ENCODE measurements at regions of chr5 and their contacts with region 1.

Region 1: GRCh38 chr5:33257807-33258483 is 182.8 kb upstream of the TARS1 start:
- DNase-seq: peak; percentile 80
- H3K4me3 ChIP-seq: no peak overlapping the region
- H3K27ac ChIP-seq: no peak overlapping the region
- H3K4me1 ChIP-seq: peaks cover 9% of the 10 kb centered on the region
- H3K27me3 ChIP-seq: no peaks in the 10 kb centered on the region
- CTCF ChIP-seq: no peak
- POLR2A ChIP-seq: no peak

Region 2: GRCh38 chr5:32964261-32964660 is 293.7 kb before region 1 on chr5:
- CTCF ChIA-PET with region 1: no interaction called
- POLR2A ChIA-PET with region 1: no interaction called
- dilution Hi-C with region 1: no loop called
- intact Hi-C with region 1: no loop called
- DNase-seq: no peak
- H3K4me3 ChIP-seq: no peak overlapping the region
- H3K27ac ChIP-seq: no peak overlapping the region
- H3K4me1 ChIP-seq: no peaks in the 10 kb centered on the region
- H3K27me3 ChIP-seq: peaks cover 0 to 3% of the 10 kb centered on the region in 2 experiments
- CTCF ChIP-seq: no peak
- POLR2A ChIP-seq: no peak

Region 3: DNA sequence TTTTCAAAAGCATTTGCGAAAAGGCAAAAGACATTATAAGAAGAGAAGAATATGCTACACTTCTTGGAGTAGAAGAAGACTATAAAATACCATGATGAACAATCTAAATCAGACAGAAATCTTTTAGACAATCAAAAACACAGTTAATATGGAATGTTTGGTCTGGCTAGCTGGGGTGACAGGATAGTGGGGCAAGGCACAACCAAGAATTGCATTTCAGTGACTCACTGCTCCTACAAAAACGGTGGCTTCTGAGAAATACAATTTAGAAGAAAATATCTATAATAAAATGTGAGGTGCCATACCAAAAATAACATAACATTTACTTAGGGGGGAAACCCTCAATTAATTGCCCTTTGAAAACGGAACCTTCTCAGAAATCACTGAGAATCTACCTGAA is 183.4 kb before region 1 on chr5:
- CTCF ChIA-PET with region 1: no interaction called
- POLR2A ChIA-PET with region 1: no interaction called
- dilution Hi-C with region 1: no loop called
- intact Hi-C with region 1: no loop called
- DNase-seq: no peak
- H3K4me3 ChIP-seq: no peak overlapping the region
- H3K27ac ChIP-seq: no peak overlapping the region
- H3K4me1 ChIP-seq: no peaks in the 10 kb centered on the region
- H3K27me3 ChIP-seq: peaks cover 0 to 2% of the 10 kb centered on the region in 2 experiments
- CTCF ChIP-seq: no peak
- POLR2A ChIP-seq: no peak

Region 4: DNA sequence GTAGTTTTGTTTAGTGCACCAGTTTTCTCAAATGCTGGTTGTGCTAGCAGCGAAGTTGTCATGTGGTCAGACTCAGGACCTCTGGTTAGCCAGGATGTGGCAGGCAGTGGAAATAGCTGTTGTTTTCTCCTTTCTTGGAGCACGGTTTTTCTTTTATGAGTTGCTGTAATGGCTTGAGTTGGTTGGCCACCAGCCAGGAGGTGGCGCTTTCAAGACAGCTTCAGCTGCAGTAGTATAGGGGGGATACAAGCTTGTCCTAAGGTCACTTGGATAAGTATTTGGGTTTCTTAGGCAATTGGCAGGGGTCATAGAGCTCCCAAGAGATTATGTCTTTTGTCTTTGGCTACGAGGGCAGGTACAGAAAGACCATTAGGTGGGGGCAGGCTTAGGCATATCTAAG is 91.4 kb before region 1 on chr5:
- CTCF ChIA-PET with region 1: no interaction called
- POLR2A ChIA-PET with region 1: no interaction called
- dilution Hi-C with region 1: no loop called
- intact Hi-C with region 1: loop called (anchors 5 kb)
- DNase-seq: peak; percentile 17
- H3K4me3 ChIP-seq: no peak overlapping the region
- H3K27ac ChIP-seq: no peak overlapping the region
- H3K4me1 ChIP-seq: no peaks in the 10 kb centered on the region
- H3K27me3 ChIP-seq: no peaks in the 10 kb centered on the region
- CTCF ChIP-seq: no peak
- POLR2A ChIP-seq: no peak

Region 5: GRCh38 chr5:33241802-33242201 is 16.1 kb before region 1 on chr5:
- CTCF ChIA-PET with region 1: interaction called, 9 read pairs
- POLR2A ChIA-PET with region 1: no interaction called
- dilution Hi-C with region 1: no loop called
- intact Hi-C with region 1: loop called (anchors 2 kb)
- DNase-seq: peak; percentile 93
- H3K4me3 ChIP-seq: no peak overlapping the region
- H3K27ac ChIP-seq: no peak overlapping the region
- H3K4me1 ChIP-seq: peaks cover 13% of the 10 kb centered on the region
- H3K27me3 ChIP-seq: no peaks in the 10 kb centered on the region
- CTCF ChIP-seq: no peak
- POLR2A ChIP-seq: peak; percentile 32

Region 6: GRCh38 chr5:33282157-33282556 is 24.2 kb after region 1 on chr5:
- CTCF ChIA-PET with region 1: no interaction called
- POLR2A ChIA-PET with region 1: no interaction called
- dilution Hi-C with region 1: no loop called
- intact Hi-C with region 1: no loop called
- DNase-seq: no peak
- H3K4me3 ChIP-seq: no peak overlapping the region
- H3K27ac ChIP-seq: no peak overlapping the region
- H3K4me1 ChIP-seq: peaks cover 2% of the 10 kb centered on the region
- H3K27me3 ChIP-seq: no peaks in the 10 kb centered on the region
- CTCF ChIP-seq: no peak
- POLR2A ChIP-seq: no peak

Region 7: DNA sequence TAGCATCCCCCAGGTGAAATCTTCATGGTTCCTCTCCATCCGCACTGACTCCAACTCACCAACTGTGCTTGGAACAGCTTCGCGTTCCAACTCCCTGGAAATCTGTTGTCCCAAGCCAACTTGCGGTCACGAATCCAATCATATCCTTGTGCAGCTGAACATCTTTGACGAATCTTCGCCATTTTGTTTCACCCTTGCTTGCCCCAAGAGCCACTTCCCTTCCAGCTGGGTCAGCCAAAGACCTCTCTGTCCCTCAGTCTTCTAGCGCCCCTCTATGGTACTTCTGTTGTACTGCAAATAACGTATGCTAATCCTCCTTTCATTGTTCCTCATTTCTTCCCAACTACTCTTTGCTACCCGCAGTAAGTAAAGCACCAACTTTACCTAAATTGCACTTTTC is 121.8 kb after region 1 on chr5:
- CTCF ChIA-PET with region 1: interaction called, 3 read pairs
- POLR2A ChIA-PET with region 1: no interaction called
- dilution Hi-C with region 1: no loop called
- intact Hi-C with region 1: loop called (anchors 5 kb)
- DNase-seq: peak; percentile 56
- H3K4me3 ChIP-seq: no peak overlapping the region
- H3K27ac ChIP-seq: no peak overlapping the region
- H3K4me1 ChIP-seq: no peaks in the 10 kb centered on the region
- H3K27me3 ChIP-seq: peaks cover 2 to 4% of the 10 kb centered on the region in 2 experiments
- CTCF ChIP-seq: peak; percentile 66 to 69
- POLR2A ChIP-seq: no peak

Measured in endothelial cell of umbilical vein (primary cell).